GM10248 (cell line): ENCODE measurements at regions of chr18 and their contacts with region 1.

Region 1: GRCh38 chr18:11937874-11938478 is 29.9 kb upstream of the MPPE1 start:
- DNase-seq: peak; percentile 80
- CTCF ChIP-seq: peak; percentile 58

Region 2: GRCh38 chr18:11733031-11733430 is 204.9 kb before region 1 on chr18:
- CTCF ChIA-PET with region 1: interaction called, 11 read pairs
- POLR2A ChIA-PET with region 1: no interaction called
- DNase-seq: peak; percentile 82
- CTCF ChIP-seq: peak; percentile 88

Region 3: GRCh38 chr18:11887305-11888262 is 50.4 kb before region 1 on chr18:
- CTCF ChIA-PET with region 1: no interaction called
- POLR2A ChIA-PET with region 1: no interaction called
- DNase-seq: no peak
- CTCF ChIP-seq: no peak

Region 4: GRCh38 chr18:11925800-11926481 is 12.0 kb before region 1 on chr18:
- CTCF ChIA-PET with region 1: interaction called, 97 read pairs
- POLR2A ChIA-PET with region 1: no interaction called
- DNase-seq: no peak
- CTCF ChIP-seq: no peak

Region 5: GRCh38 chr18:11969904-11970844 is 32.2 kb after region 1 on chr18:
- CTCF ChIA-PET with region 1: no interaction called
- POLR2A ChIA-PET with region 1: no interaction called
- DNase-seq: no peak
- CTCF ChIP-seq: no peak

Region 6: GRCh38 chr18:11980555-11981382 is 42.8 kb after region 1 on chr18:
- CTCF ChIA-PET with region 1: interaction called, 16 read pairs
- POLR2A ChIA-PET with region 1: no interaction called
- DNase-seq: peak; percentile 96
- CTCF ChIP-seq: peak; percentile 17

Region 7: DNA sequence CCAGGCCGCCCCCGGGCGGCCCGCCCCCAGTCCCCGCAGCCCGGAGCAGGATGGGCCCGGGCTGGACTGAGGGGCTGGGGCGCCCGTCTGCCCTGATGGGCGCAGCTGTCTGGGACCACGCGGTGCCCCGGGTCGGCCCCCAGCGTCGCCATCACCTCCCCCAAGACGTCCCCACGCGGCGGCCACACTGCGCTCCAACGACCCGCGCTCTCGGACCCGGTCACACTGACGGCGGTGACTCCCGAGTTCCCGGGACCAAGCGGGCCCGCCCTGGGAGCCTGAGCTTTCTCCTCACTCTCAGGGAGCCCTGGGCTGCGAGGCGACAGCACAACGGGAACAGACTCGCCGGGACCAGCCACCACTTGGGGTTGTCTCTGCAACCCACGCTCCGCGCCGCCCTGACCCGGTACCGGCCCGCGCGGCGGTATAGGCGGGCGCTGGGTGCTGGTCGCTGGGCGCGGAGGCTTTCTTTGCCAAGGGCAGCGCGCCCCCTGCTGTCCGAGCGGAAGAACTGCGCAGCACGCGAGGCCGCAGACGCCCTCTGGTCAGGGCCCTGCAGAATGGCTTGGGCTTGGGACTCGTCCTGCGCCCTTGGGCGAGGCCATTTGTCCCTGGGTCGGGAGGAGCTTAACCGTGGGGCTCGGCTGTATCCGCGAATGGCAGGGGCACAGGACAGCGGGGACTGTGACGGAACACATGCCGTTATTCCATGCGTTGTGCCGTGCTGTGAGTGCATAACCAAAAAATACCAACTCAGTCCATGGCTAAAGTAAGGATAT is 100.9 kb after region 1 on chr18:
- CTCF ChIA-PET with region 1: interaction called, 91 read pairs
- POLR2A ChIA-PET with region 1: no interaction called
- DNase-seq: peak; percentile 86
- CTCF ChIP-seq: peak; percentile 99